Cardiac septum (tissue), 1 donor: ENCODE measurements at regions of chr19 and their contacts with region 1.

Region 1: GRCh38 chr19:41449079-41449864 is 6.3 kb downstream of the ERICH4 start:
- DNase-seq: peak; percentile 90

Region 2: GRCh38 chr19:41156207-41156606 is 293.1 kb before region 1 on chr19:
- intact Hi-C with region 1: no loop called
- DNase-seq: no peak

Region 3: GRCh38 chr19:41537789-41538188 is 88.5 kb after region 1 on chr19:
- intact Hi-C with region 1: loop called (anchors 2 kb)
- DNase-seq: no peak

Region 4: DNA sequence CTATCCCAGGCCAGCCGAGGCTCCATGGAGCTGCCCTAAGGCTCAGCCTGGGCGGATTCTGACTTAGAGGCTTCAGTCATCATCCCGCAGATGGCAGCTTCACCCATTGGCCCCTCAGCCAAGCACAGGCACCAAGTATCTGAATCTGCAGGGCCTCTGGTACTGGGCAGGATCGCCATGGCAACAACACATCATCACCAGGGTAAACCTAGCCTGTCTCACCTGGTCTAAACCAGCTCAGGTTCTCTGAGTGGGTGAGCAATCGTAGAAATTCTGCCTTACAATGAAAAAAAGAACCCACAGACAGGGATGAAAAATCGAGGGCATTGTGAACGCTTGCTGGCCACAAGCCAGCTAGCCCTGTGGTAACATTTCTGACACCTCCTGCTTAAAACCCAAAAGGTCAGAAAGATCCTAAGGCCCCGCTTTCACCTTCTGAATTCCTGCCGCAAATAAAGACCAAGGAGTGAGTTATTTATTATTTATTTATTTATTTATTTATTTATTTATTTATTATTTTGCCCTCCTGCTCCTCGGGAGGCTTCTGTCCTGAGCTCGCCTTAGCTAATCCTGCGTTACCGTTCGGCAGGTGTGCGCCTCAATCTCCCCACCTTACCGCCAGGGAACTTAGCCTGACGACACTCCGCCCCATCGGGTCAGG is 114.7 kb after region 1 on chr19:
- intact Hi-C with region 1: loop called (anchors 1 kb)
- DNase-seq: no peak